Activated naive CD4-positive, alpha-beta T cell treated with anti-CD3 and anti-CD28 coated beads for 36 hours (primary cell): ENCODE measurements at regions of chr13 and their contacts with region 1.

Region 1: GRCh38 chr13:93872372-93872771 is 607.1 kb downstream of the DCT start:
- DNase-seq: no peak
- H3K4me3 Mint-ChIP-seq: no peak overlapping the region
- H3K27ac Mint-ChIP-seq: no peak overlapping the region
- H3K4me1 Mint-ChIP-seq: no peaks in the 10 kb centered on the region
- H3K27me3 Mint-ChIP-seq: peaks cover 20% of the 10 kb centered on the region

Region 2: DNA sequence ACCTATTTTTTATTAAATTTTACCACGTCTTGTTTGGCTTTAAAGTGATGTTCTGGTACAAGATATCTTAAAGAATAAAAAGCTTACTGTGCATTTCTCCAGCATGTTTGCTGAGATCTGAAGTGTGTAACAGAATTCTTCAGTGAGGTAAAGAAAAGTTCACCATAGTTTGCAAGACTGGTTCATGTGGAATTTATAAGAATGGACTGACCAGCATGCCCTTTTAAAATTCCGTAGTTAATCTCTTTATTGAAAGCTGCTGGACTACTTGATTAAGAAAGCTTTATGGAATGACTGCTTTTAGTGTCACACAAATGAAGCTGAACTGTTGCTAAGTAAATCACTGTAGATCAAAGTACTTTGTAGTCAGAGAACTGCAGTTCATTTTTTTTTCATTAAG is 526.6 kb before region 1 on chr13:
- CTCF ChIA-PET with region 1: no interaction called
- intact Hi-C with region 1: loop called (anchors 5 kb)
- DNase-seq: no peak
- H3K4me3 Mint-ChIP-seq: no peak overlapping the region
- H3K27ac Mint-ChIP-seq: no peak overlapping the region
- H3K4me1 Mint-ChIP-seq: no peaks in the 10 kb centered on the region
- H3K27me3 Mint-ChIP-seq: no peaks in the 10 kb centered on the region